Dendritic cell treated with granulocyte-macrophage colony-stimulating factor and Interleukin-4, amounts not matched to agents 40 ng/mL and 50 ng/mL, for 4 days (primary cell): ENCODE measurements at regions of chr3 and their contacts with region 1.

Region 1: GRCh38 chr3:126911162-126912026 is 71.5 kb upstream of the PLXNA1 start:
- H3K4me3 Mint-ChIP-seq: peak overlapping the region; percentile 55
- H3K27ac Mint-ChIP-seq: peak overlapping the region; percentile 98
- H3K4me1 Mint-ChIP-seq: peaks cover 56% of the 10 kb centered on the region
- H3K27me3 Mint-ChIP-seq: peaks cover 37% of the 10 kb centered on the region

Region 2: GRCh38 chr3:126883241-126883640 is 28.2 kb before region 1 on chr3:
- intact Hi-C with region 1: no loop called
- H3K4me3 Mint-ChIP-seq: no peak overlapping the region
- H3K27ac Mint-ChIP-seq: no peak overlapping the region
- H3K4me1 Mint-ChIP-seq: peaks cover 3% of the 10 kb centered on the region
- H3K27me3 Mint-ChIP-seq: peaks cover 77% of the 10 kb centered on the region

Region 3: DNA sequence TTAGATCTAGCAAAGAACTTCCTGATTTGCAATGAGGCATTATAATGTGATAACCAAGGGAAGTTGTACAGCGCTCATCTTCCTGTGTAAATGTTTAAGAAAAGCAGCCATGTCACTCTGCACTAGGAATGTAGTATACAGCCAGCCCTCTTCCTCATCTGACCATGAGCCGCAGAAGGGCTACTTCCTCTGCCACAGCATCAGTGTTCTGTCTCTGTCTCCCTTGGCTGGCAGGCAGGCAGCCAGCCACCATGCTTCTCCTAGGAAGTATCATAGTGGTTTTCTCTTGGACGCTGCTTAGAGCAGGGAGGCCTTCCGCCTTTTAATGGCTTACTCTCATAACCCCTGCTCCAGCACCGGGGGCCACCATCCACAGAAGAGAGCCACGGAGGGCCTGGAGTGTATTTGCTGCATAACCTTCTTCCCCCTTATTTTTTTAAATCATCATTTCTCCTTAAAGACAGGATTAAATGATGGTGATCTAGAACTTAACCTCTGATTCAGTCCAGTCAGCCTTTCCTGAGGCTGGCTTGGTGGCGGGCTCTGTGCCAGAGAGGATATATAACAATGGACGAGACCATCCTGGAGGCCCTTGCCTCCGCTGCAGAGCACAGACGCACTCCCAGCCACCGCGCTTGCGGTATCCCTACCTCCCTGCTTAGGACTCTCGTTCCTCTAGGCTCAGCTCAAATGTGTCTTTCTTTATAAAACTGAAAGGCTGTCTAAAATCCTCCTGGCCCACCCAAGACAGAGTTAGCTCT is 14.2 kb after region 1 on chr3:
- intact Hi-C with region 1: loop called (anchors 2 kb)
- H3K4me3 Mint-ChIP-seq: no peak overlapping the region
- H3K27ac Mint-ChIP-seq: peak overlapping the region; percentile 90
- H3K4me1 Mint-ChIP-seq: peaks cover 44% of the 10 kb centered on the region
- H3K27me3 Mint-ChIP-seq: peaks cover 77% of the 10 kb centered on the region

Region 4: DNA sequence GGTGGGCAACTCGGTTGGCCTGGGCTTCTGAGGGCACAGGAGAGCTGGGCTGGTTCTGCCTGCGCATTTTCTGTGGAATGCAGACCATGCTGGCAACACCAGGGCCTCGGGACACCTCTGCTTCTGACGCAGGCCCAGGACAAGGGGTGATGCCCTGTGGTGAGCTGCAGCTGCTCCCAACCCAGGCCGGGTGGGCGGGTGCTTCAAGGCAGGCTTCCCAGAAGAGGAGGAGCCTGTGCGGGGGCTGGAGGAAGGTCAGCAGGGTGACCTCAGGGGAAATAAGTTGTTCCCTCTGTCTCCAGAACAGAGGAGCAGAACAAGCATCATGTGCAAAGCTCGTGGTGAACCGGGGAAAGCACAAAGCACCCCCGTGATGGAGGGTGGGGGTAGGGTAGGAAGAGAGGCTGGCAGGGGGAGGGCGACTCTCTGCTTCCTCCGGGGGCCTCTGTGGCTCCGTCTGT is 60.5 kb after region 1 on chr3:
- intact Hi-C with region 1: loop called (anchors 2 kb)
- H3K4me3 Mint-ChIP-seq: no peak overlapping the region
- H3K27ac Mint-ChIP-seq: peak overlapping the region; percentile 87
- H3K4me1 Mint-ChIP-seq: peaks cover 56% of the 10 kb centered on the region
- H3K27me3 Mint-ChIP-seq: peaks cover 77% of the 10 kb centered on the region